Activated CD4-positive, alpha-beta memory T cell treated with anti-CD3 and anti-CD28 coated beads, Interleukin-2, amount 10 ng/mL, durations not matched to agents 7 days and 5 days (primary cell): ENCODE measurements at regions of chr12 and their contacts with region 1.

Region 1: DNA sequence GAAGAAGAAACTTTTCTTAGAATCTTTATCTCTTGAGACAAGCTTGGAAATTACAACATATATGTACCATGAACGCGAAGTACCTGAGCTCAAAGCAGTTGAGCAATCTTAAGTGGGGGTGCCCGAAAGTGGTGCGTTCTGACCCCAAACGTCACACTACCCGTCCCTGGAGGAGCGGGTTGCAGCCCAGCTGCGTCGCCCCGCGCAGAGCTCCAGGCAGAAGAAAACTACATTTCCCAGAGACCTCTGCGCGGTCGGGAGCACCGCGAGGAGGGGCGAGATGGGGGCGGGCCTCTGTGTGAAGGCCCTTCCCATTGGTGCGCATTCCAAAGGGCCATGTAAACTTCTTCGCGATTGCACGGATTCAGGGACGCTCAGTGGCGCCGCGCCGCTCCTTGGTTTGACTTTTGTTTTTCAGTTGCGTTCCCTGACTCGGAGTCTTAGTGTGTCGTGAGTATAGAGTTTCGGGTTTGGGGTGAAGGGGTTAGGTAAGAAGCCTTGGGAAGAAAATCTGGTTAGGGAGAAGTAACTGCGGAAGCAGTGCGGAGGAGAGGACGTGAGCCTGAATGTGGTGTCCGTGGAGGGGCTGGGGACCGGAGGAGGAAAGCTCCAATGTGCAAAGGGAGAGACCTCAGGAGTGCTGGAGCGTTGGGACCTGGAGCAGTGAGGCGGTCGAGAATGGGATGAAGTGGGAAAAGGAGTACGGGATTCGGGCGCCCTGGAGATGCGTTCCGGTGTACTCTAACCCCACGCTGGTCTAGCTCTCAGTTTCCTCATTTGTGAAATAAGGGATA is at the start of gene CCDC77:
- DNase-seq: peak; percentile 96
- H3K4me3 Mint-ChIP-seq: no peak within 1 kb of the TSS
- H3K27ac Mint-ChIP-seq: no peak within 1 kb of the TSS
- H3K4me1 Mint-ChIP-seq: peaks cover 2% of the 10 kb centered on the region
- H3K27me3 Mint-ChIP-seq: no peaks in the 10 kb centered on the region
- total RNA-seq, gene CCDC77: 11.6 to 13.4 TPM

Region 2: DNA sequence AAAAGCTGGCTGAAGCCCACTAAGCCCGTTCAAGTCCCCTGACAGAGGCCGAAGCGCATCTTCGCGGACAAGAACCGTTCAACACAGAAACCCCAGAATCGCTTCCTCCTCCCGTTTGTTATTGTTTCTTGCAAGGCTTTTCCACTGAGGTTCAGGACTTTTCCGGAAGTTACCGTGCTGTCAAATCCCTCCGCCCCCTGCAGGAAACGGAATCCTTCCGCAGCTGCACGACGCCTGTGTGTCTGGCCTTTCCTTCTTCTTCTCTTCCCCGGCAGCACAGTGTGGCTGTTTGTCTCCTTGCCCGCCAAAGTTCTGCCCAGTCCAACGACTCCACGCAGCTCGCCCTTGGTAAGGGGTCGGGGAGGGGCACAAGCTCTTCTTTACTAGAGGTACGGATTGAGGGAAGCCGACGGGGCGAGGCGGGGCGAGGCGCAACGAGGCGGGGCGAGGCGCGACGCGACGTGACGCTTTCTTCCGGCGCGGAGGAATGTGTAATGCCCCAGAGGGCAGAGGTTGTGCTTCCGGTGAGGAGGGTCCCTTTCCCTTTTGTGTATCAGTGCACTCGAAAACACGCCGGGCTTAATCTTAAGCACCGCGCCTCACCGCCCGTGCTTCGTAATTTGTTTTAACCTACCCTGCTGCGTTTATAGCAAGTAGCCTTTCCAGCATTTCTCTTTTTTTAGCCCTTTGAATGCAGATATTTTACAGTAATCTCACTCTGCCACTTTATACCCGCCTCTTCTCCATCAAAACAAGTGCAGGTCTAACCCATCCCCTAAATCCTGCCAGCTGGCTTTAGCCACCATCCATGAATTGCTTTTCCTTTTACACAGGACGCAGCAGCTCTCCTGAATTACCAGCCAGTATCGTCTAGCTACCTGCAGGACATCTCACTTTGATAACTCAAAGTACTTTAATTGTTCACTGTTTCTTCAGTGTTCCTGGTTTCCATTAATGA is 12.0 kb before region 1 on chr12 and contains the start of gene KDM5A:
- CTCF ChIA-PET with region 1: interaction called, 40 read pairs
- POLR2A ChIA-PET with region 1: interaction called, 74 read pairs
- DNase-seq: peak; percentile 94
- H3K4me3 Mint-ChIP-seq: peak within 1 kb of the TSS; percentile 90
- H3K27ac Mint-ChIP-seq: peak within 1 kb of the TSS; percentile 98
- H3K4me1 Mint-ChIP-seq: peaks cover 35% of the 10 kb centered on the region
- H3K27me3 Mint-ChIP-seq: no peaks in the 10 kb centered on the region
- total RNA-seq, gene KDM5A: 91.4 to 94.6 TPM